Calu3 (cell line): ENCODE measurements at regions of chr17 and their contacts with region 1.

Region 1: DNA sequence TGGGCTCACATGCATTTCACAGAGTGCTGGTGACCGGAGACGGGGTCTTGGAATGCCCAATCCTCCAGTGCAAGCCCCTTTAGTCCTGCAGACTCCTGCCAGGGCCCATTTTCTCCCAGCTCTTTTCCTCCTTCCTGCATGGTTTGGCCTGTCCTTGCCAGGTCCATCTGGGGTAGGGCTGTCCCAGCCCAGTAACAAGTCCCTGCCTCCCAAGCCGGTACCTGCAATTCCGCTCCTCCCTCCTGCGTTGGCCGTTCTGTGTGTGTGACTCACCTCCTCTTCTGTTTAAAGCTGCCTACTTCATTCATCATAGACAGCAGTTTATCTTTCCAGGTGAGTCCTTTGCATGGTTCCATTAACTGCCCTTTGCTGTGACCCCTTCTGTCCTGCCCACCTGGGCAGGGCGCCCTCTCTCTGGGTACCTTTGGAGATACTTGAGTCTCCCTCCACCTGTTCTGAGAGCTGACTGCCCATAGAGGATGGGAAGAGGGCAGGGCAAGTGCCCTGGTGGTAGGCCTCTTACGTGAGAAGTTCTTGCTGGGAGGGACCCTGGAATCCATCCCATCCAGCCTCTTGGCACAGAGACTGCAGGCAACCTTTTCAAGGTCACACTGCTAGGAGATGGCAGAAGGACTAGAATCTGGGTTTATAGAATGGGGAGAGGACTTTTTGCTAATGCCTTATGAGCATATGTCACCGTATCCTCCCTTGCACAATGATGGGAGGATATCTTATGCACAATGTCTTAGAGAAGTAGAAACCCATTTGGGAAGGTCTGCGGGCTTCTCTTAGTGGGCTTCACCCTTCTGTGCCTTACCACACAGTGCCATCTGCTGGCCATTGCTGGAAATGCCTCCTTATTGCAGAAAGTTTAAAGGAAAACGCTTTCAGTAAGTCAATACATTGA is 29.7 kb upstream of the LGALS9 start:
- DNase-seq: peak; percentile 78
- H3K4me3 Mint-ChIP-seq: no peak overlapping the region
- H3K27ac Mint-ChIP-seq: no peak overlapping the region
- H3K4me1 Mint-ChIP-seq: peaks cover 10% of the 10 kb centered on the region
- H3K27me3 Mint-ChIP-seq: no peaks in the 10 kb centered on the region
- CTCF ChIP-seq: peak; percentile 68

Region 2: GRCh38 chr17:27091043-27091497 is 510.3 kb before region 1 on chr17:
- CTCF ChIA-PET with region 1: no interaction called
- intact Hi-C with region 1: no loop called
- DNase-seq: no peak
- H3K4me3 Mint-ChIP-seq: no peak overlapping the region
- H3K27ac Mint-ChIP-seq: no peak overlapping the region
- H3K4me1 Mint-ChIP-seq: no peaks in the 10 kb centered on the region
- H3K27me3 Mint-ChIP-seq: peaks cover 21% of the 10 kb centered on the region
- CTCF ChIP-seq: no peak

Region 3: DNA sequence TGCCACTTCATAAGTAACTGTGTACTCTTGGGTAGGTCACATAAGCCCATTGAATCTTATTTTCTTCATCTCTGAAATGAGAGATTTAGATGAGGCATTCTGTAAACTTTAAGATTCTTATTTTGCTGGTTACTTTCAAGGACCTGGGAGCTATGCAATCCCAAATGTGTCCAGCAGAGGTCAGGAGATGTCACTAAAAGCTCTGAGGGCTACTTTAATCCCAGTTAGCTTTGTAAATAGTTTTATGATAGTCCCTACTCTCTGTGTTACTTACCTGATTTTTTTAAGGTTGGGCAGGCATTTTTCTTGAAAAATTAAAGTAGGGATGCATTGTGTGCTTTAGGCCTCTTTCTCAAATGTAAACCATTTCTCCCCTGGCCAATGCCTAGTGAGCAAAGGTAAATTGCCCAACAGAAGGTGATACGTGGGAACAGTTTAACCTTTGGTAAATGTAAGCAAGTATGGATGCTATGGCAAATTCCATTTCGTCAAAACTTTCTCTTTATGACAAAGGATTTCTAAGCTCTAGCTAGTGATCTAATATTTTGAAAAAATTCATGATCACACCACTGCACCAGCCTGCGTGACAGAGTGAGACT is 364.5 kb before region 1 on chr17:
- CTCF ChIA-PET with region 1: interaction called, 7 read pairs
- intact Hi-C with region 1: loop called (anchors 1 kb)
- DNase-seq: peak; percentile 74
- H3K4me3 Mint-ChIP-seq: no peak overlapping the region
- H3K27ac Mint-ChIP-seq: no peak overlapping the region
- H3K4me1 Mint-ChIP-seq: peaks cover 22% of the 10 kb centered on the region
- H3K27me3 Mint-ChIP-seq: no peaks in the 10 kb centered on the region
- CTCF ChIP-seq: peak; percentile 66

Region 4: DNA sequence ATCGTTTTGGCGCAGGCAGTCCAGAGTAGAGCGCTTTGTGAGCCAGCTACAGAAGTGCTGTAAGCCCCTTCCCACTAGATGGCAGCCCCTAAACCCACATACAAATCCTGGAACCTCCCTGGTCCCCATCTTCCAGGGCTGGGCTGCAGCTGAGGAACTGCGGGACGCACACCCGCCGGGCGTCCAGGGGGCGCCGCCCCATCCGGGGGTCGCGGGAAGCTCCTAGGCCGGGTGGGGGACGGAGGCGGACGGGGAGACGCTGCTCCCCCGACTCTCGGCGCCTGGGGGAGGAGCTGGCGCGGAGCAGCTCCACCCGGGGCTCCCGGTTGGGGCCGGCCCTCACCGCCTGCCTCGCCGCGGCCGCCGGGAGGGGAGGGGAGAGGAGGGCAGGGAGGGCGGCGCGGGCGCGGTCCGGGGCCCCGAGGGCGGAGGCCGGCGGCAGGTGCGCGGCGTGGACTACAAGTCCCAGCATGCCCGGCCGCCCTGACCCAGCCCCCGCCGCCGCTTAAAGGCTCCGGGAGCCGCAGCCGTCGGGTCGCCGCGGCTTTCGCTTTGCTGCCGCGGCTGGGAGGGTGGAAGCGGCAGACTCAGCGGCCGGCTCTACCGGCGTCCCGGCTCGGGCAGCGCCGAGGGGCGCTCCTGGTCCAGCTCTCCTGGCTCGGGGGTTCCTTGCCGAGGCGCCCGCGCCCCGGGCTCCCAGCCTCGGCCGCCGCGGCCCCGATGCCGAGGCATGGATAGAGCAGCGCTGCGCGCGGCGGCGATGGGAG is 145.2 kb before region 1 on chr17 and contains the start of gene KSR1:
- CTCF ChIA-PET with region 1: interaction called, 16 read pairs
- intact Hi-C with region 1: loop called (anchors 10 kb)
- DNase-seq: peak; percentile 82
- H3K4me3 Mint-ChIP-seq: peak within 1 kb of the TSS; percentile 72
- H3K27ac Mint-ChIP-seq: no peak within 1 kb of the TSS
- H3K4me1 Mint-ChIP-seq: peaks cover 18% of the 10 kb centered on the region
- H3K27me3 Mint-ChIP-seq: peaks cover 64% of the 10 kb centered on the region
- CTCF ChIP-seq: no peak
- total RNA-seq, gene KSR1: 3.6 and 4.5 TPM in 2 replicates

Region 5: DNA sequence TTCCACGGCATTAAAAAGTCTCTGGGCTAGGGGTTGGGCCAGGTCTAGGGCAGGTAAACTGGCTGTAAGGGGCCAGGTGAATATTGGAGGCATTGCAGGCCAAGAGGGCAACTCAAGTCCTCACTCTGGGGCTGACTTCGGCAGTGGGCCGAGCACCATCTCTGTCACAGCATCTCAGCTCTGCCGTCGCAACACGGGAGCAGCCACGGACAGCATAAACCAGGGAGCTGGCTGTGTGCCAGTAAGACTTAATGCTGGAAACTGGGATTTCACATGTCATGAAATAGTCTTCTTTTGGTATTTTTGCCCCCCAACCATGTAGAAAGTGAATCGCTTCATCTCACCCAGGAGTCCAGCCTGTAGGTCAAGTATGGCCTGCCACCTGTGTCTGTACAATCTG is 17.1 kb after region 1 on chr17:
- CTCF ChIA-PET with region 1: interaction called, 11 read pairs
- intact Hi-C with region 1: no loop called
- DNase-seq: no peak
- H3K4me3 Mint-ChIP-seq: no peak overlapping the region
- H3K27ac Mint-ChIP-seq: no peak overlapping the region
- H3K4me1 Mint-ChIP-seq: no peaks in the 10 kb centered on the region
- H3K27me3 Mint-ChIP-seq: no peaks in the 10 kb centered on the region
- CTCF ChIP-seq: no peak

Region 6: DNA sequence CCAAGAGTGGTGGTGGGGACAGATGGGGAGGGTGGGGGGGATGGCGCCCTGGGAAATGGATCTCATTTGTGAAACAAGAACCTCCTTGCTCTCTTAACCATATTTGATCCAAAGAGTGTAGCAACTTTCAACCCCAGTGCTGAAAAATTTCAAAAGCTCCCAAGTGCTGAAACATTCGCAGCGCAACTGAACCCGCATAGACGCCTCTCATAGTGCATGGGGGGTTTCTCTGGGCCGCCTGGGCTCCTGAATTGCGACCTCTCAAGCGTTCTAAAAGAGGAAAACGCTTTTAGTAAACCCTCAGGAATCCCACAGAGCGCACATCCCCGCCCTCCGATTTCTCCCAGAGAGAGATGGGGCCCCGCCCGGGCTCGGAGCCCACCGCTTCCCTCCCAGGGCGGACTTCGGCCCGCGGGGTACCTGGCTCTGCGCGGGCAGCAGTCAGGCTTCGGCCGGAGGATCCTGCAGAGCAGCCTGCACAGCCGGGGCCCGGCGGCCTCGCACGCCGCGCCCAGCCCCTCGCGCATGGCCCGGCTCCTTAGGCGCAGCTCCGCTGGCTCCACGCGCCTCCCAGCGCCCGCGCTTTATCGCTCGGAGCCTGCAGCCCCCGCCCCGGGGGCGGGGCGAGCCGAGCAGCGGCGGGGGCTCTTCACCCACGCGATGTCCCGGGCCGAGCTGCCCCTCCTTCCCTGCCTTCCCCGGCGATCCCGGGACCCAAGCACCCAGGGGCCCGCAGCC is 192.0 kb after region 1 on chr17:
- CTCF ChIA-PET with region 1: no interaction called
- intact Hi-C with region 1: no loop called
- DNase-seq: no peak
- H3K4me3 Mint-ChIP-seq: no peak overlapping the region
- H3K27ac Mint-ChIP-seq: no peak overlapping the region
- H3K4me1 Mint-ChIP-seq: no peaks in the 10 kb centered on the region
- H3K27me3 Mint-ChIP-seq: peaks cover 80% of the 10 kb centered on the region
- CTCF ChIP-seq: no peak